GM13976 (cell line): ENCODE measurements at regions of chr6 and their contacts with region 1.

Region 1: GRCh38 chr6:2911171-2911570 is 8.1 kb upstream of the SERPINB9 start:
- DNase-seq: no peak
- CTCF ChIP-seq: no peak

Region 2: DNA sequence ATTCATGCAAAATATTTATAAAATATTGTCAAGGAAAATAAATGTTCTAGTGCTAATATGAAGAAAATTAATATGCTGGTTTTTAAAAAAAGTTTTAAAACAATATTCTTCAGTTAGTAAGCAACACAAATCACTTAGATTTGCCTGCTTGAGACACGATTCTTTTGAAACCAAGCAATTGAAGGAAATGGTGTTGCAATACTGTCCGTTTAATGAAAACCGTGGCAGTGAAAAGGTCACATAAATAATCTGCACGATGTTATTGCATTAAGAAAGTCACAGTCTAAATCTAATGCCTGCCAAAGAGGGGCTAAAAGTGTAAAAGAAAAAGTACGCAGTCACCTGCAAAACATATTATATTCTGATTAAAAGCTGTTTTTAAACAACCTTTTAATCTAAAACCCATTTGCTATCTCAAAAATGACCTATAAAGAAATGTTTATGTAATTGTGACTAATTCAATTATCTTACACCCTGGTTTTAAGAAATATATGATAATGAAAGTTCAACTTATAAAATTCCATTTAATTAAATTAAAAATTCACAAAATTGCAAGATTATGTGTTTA is 808.8 kb before region 1 on chr6:
- in situ Hi-C with region 1: no loop called
- DNase-seq: no peak
- CTCF ChIP-seq: no peak

Region 3: DNA sequence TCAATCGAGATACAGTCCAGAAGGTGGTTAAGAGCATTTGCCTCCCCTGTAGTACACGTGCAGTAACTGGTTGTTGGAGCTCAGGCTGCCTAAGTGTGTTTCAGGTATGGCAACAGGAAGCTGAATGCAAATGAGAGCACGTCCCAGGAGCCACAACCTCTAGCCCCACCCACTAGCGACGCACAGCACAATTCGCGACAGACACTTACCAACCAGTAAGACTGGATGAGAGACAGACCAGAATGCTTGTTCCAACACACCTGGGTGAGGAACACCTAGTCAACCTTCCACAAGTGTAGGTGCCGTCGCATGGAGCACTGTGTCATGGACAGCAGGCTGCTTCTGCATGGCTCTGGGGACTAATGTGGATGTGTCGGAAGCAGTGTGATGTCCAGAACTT is 62.3 kb before region 1 on chr6:
- in situ Hi-C with region 1: loop called (anchors 5 kb)
- DNase-seq: no peak
- CTCF ChIP-seq: no peak